PC-9 (cell line): ENCODE measurements at regions of chr12 and their contacts with region 1.

Region 1: DNA sequence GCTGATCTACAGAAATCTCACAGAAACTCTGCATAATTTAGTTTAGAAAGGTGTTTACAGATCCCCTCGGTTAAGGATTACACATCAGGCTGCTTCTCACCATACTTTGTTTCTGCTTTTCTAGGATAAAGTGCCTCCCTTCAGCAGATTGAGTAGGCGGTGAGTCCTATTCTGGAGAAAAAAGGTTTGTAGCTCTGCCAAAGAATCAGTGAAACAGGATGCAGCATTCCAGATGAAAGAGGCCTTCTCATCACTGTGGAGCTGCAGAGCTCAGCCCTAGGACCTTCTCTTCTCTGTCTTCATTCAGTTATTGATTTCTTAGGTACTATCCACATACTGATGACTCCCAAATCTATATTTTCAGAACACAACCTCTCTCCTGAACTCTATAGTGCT is 155.5 kb upstream of the KRR1 start:
- DNase-seq: no peak
- H3K4me3 ChIP-seq: no peak overlapping the region
- H3K27ac ChIP-seq: no peak overlapping the region
- H3K4me1 ChIP-seq: no peaks in the 10 kb centered on the region
- H3K27me3 ChIP-seq: no peaks in the 10 kb centered on the region
- CTCF ChIP-seq: no peak

Region 2: GRCh38 chr12:75623631-75624118 is 43.3 kb before region 1 on chr12:
- CTCF ChIA-PET with region 1: interaction called, 10 read pairs
- POLR2A ChIA-PET with region 1: no interaction called
- intact Hi-C with region 1: no loop called
- DNase-seq: peak; percentile 33 to 69
- H3K4me3 ChIP-seq: no peak overlapping the region
- H3K27ac ChIP-seq: peak overlapping the region; percentile 62
- H3K4me1 ChIP-seq: peaks cover 16% of the 10 kb centered on the region
- H3K27me3 ChIP-seq: no peaks in the 10 kb centered on the region
- CTCF ChIP-seq: peak; percentile 54; the same call in 1 of the 2 replicates

Region 3: GRCh38 chr12:75650595-75651341 is 16.2 kb before region 1 on chr12:
- CTCF ChIA-PET with region 1: no interaction called
- POLR2A ChIA-PET with region 1: no interaction called
- intact Hi-C with region 1: no loop called
- DNase-seq: no peak
- H3K4me3 ChIP-seq: no peak overlapping the region
- H3K27ac ChIP-seq: no peak overlapping the region
- H3K4me1 ChIP-seq: peaks cover 1% of the 10 kb centered on the region; the same call in 1 of the 2 replicates
- H3K27me3 ChIP-seq: no peaks in the 10 kb centered on the region
- CTCF ChIP-seq: no peak

Region 4: GRCh38 chr12:75677522-75677921 is 10.6 kb after region 1 on chr12:
- CTCF ChIA-PET with region 1: no interaction called
- POLR2A ChIA-PET with region 1: no interaction called
- intact Hi-C with region 1: no loop called
- DNase-seq: no peak
- H3K4me3 ChIP-seq: no peak overlapping the region
- H3K27ac ChIP-seq: no peak overlapping the region
- H3K4me1 ChIP-seq: no peaks in the 10 kb centered on the region
- H3K27me3 ChIP-seq: no peaks in the 10 kb centered on the region
- CTCF ChIP-seq: no peak

Region 5: GRCh38 chr12:75759842-75760572 is 93.1 kb after region 1 on chr12:
- CTCF ChIA-PET with region 1: no interaction called
- POLR2A ChIA-PET with region 1: no interaction called
- intact Hi-C with region 1: no loop called
- DNase-seq: no peak
- H3K4me3 ChIP-seq: no peak overlapping the region
- H3K27ac ChIP-seq: no peak overlapping the region
- H3K4me1 ChIP-seq: peaks cover 9% of the 10 kb centered on the region
- H3K27me3 ChIP-seq: no peaks in the 10 kb centered on the region
- CTCF ChIP-seq: no peak

Region 6: GRCh38 chr12:75954041-75954440 is 287.1 kb after region 1 on chr12:
- CTCF ChIA-PET with region 1: no interaction called
- POLR2A ChIA-PET with region 1: no interaction called
- intact Hi-C with region 1: no loop called
- DNase-seq: peak; percentile 57 to 99
- H3K4me3 ChIP-seq: peak overlapping the region; percentile 19; the same call in 1 of the 2 replicates
- H3K27ac ChIP-seq: peak overlapping the region; percentile 97
- H3K4me1 ChIP-seq: peaks cover 67% of the 10 kb centered on the region
- H3K27me3 ChIP-seq: no peaks in the 10 kb centered on the region
- CTCF ChIP-seq: no peak